Dorsolateral prefrontal cortex (tissue), 120 donors: ENCODE measurements at regions of chr12 and their contacts with region 1.

Region 1: GRCh38 chr12:96985480-96986362 is 78.7 kb downstream of the NEDD1 start:
- DNase-seq: peak in 3 of 10 donors; percentile 21 to 57 (median 41)
- H3K4me3 ChIP-seq: peak overlapping the region; percentile 36 to 76 (median 61)
- H3K27ac ChIP-seq: no peak overlapping the region
- H3K27me3 ChIP-seq: peaks cover 0 to 4% (median 0%) of the 10 kb centered on the region in 45 donors
- CTCF ChIP-seq: peak; percentile 39 to 93 (median 78)

Region 2: GRCh38 chr12:96578526-96579125 is 407.1 kb before region 1 on chr12:
- intact Hi-C with region 1: loop called (anchors 1 to 2 kb)
- DNase-seq: no peak
- H3K4me3 ChIP-seq: no peak overlapping the region
- H3K27ac ChIP-seq: peak overlapping the region in 11 of 59 donors; percentile 2 to 46 (median 23)
- H3K27me3 ChIP-seq: no peaks in the 10 kb centered on the region
- CTCF ChIP-seq: peak; percentile 39 to 93 (median 72)

Region 3: GRCh38 chr12:97308576-97309198 is 323.0 kb after region 1 on chr12:
- intact Hi-C with region 1: loop called (anchors 5 kb)
- DNase-seq: no peak
- H3K4me3 ChIP-seq: no peak overlapping the region
- H3K27ac ChIP-seq: no peak overlapping the region
- H3K27me3 ChIP-seq: peaks cover 0 to 27% (median 0%) of the 10 kb centered on the region in 45 donors
- CTCF ChIP-seq: peak; percentile 53 to 95 (median 84)

Region 4: DNA sequence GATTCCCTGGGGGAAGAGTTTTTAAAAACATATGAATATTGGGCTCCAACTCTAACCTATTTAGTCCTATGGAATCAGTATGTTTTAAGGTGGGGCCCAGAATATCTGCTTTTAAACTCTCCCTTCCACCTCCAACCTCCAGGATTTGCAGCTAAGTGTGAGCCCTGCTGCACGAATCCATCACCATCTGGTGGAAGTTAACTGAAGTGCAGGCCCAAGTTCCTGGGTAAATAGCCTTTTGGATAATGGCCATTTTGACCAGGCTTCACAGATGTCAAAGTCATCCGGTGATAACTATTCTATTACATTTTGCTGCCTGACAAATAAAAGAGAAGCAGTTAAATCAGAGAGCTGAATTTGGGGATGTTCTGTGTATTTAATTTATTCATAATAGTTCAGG is 418.8 kb after region 1 on chr12:
- intact Hi-C with region 1: loop called (anchors 5 kb)
- DNase-seq: peak in 6 of 10 donors; percentile 3 to 47 (median 41)
- H3K4me3 ChIP-seq: no peak overlapping the region
- H3K27ac ChIP-seq: no peak overlapping the region
- H3K27me3 ChIP-seq: peaks cover 0 to 2% (median 0%) of the 10 kb centered on the region in 45 donors
- CTCF ChIP-seq: peak; percentile 56 to 88 (median 76)

Region 5: DNA sequence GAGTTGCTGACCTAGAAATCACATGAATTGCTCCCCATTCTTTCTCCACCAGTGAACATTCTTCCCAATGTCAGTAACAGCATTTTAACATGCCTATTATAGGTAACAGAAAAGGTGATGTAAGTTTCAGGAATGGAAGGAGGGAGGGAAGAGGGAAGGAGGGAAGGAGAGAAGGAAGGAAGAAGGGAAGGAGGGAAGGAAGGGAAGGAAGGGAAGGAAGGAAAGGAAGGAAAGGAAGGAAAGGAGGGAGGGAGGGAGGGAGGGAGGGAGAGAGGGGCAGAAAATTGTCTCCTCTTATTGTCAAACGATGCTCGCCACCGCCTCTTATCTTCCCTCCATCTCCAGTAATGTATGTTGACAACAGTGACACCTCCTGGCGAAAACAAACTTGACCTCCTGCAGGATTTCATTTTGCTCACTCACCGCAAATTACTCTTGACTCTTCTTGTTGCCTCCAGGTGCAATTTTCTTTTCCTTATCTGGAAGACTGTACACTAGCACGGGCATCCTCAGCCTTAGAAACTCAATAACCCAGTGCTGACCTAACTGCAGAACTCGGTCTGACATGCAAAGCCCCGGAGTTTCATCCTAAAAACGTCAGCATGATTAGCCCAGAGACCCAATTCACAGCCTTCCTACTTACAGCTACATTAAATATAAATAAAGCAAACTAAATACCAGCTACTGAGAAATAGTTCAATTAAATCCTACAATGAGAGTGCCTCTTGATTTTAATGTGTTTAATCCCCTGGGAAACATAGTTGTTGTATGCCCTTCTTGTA is 1017.2 kb after region 1 on chr12:
- intact Hi-C with region 1: loop called in 1 of 2 experiments (anchors 10 kb)
- DNase-seq: peak in 3 of 10 donors; percentile 4 to 40 (median 10)
- H3K4me3 ChIP-seq: no peak overlapping the region
- H3K27ac ChIP-seq: no peak overlapping the region
- H3K27me3 ChIP-seq: peaks cover 0 to 13% (median 0%) of the 10 kb centered on the region in 45 donors
- CTCF ChIP-seq: peak in 53 of 56 donors; percentile 22 to 61 (median 41)

Region 6: GRCh38 chr12:98373025-98373554 is 1387.4 kb after region 1 on chr12:
- intact Hi-C with region 1: loop called in 1 of 2 experiments (anchors 10 kb)
- DNase-seq: no peak
- H3K4me3 ChIP-seq: no peak overlapping the region
- H3K27ac ChIP-seq: no peak overlapping the region
- H3K27me3 ChIP-seq: peaks cover 0 to 5% (median 0%) of the 10 kb centered on the region in 45 donors
- CTCF ChIP-seq: peak; percentile 15 to 78 (median 58)

Region 7: DNA sequence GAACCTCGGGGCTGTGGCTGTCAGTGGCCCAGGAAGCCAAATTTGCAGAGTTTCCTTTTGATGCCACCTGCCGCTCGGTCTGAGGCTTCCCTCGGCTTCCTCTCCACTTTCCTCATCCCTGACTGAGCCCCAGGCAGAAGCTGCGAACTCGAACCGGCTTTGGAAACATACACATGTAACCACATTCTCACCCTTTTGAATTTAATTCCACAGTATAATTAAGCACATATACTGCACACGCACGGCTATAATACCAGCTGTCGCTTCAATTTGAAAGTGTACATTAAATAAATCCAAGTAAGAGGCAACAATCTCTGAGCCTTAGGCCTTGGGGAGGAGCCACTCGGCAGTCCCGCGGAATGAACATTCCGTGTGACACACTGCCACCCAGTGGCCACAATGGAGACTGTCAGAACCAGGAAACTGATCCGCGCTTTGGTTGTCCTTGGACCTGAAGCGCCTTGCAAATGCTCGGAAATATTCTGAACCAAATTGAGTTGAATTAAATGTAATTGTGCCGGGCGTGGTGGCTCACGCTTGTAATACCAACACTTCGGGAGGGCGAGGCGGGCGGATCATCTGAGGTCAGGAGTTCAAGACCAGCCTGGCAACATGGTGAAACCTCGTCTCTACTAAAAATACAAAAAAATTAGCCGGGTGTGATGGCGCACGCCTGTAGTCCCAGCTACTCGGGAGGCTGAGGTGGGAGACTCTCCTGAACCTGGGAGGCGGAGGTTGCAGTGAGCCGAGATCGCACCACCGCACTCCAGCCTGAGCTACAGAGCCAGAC is 1411.8 kb after region 1 on chr12:
- intact Hi-C with region 1: loop called (anchors 5 kb)
- DNase-seq: peak; percentile 71 to 89 (median 82)
- H3K4me3 ChIP-seq: peak overlapping the region in 58 of 59 donors; percentile 7 to 69 (median 54)
- H3K27ac ChIP-seq: peak overlapping the region in 13 of 59 donors; percentile 12 to 76 (median 39)
- H3K27me3 ChIP-seq: no peaks in the 10 kb centered on the region
- CTCF ChIP-seq: peak; percentile 87 to 98 (median 95)